GM12878 (cell line): ENCODE measurements at regions of chr12 and their contacts with region 1.

Region 1: DNA sequence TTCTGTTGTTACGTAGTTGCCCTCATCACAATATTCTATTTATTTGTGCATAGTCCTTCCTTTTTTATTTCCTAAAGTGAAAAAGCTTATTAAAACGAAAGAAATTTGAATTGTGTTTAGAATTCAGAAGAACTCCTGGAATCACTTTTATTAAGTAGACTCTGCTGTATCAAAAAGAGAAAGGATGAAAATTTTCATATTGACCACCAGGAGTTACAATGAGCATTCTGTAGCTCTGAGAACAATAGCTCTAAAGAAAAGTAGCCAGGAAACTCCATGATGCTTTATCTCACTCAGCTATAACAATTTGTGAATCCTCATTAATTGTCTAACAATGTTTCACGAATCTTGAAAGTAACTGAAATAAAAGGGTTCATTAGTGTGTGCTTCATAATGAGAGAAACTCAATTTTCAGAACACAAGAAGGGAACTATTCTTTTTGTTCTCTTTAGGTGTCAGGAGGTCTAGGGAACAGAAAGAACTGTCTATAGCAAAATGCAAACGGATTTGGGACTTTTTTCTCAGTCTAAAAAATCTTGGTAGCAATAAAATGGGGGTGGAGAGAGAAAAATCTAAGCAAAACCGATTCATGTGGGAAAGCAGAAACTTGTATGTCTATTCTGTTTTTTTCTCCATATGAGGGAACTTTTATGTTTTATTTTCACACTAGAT is 19.3 kb downstream of the ASCL1 start:
- DNase-seq: no peak
- ATAC-seq: peak; percentile 63
- H3K4me3 ChIP-seq: no peak overlapping the region
- H3K27ac ChIP-seq: no peak overlapping the region
- H3K4me1 ChIP-seq: no peaks in the 10 kb centered on the region
- H3K27me3 ChIP-seq: no peaks in the 10 kb centered on the region
- CTCF ChIP-seq: peak in 2 of 3 experiments; percentile 8 to 16; a peak in 3 of 6 replicates
- EP300 ChIP-seq: no peak
- POLR2A ChIP-seq: no peak
- RAD21 ChIP-seq: peak; percentile 11; the same call in 1 of the 2 replicates

Region 2: GRCh38 chr12:102990419-102990818 is 13.7 kb after region 1 on chr12:
- CTCF ChIA-PET with region 1: interaction called, 8 read pairs
- POLR2A ChIA-PET with region 1: interaction called, 3 read pairs
- RAD21 ChIA-PET with region 1: interaction called, 5 read pairs
- SMC1A ChIA-PET with region 1: interaction called, 21 read pairs
- in situ Hi-C with region 1: no loop called
- intact Hi-C with region 1: no loop called
- DNase-seq: no peak
- ATAC-seq: peak; percentile 49
- H3K4me3 ChIP-seq: no peak overlapping the region
- H3K27ac ChIP-seq: no peak overlapping the region
- H3K4me1 ChIP-seq: no peaks in the 10 kb centered on the region; the same call in 1 of the 2 replicates
- H3K27me3 ChIP-seq: no peaks in the 10 kb centered on the region
- CTCF ChIP-seq: 0 out of 6 replicates have a peak, but pooled peaks of 1 of the 3 experiments have one; percentile 14
- EP300 ChIP-seq: no peak
- POLR2A ChIP-seq: no peak
- RAD21 ChIP-seq: peak; percentile 46; the same call in 1 of the 2 replicates